ENCODE measurements at regions of chr3 and their contacts with region 1.

Region 1: GRCh38 chr3:124078953-124079911 is 87.3 kb upstream of the ROPN1 start:
- DNase-seq: peak; percentile 48
- H3K4me3 Mint-ChIP-seq: no peak overlapping the region
- H3K27ac Mint-ChIP-seq: no peak overlapping the region
- H3K4me1 Mint-ChIP-seq: no peaks in the 10 kb centered on the region
- H3K27me3 Mint-ChIP-seq: peaks cover 78% of the 10 kb centered on the region
- CTCF ChIP-seq: peak; percentile 72

Region 2: GRCh38 chr3:123723522-123724168 is 355.6 kb before region 1 on chr3:
- CTCF ChIA-PET with region 1: interaction called, 3 read pairs
- POLR2A ChIA-PET with region 1: no interaction called
- intact Hi-C with region 1: loop called (anchors 10 kb)
- DNase-seq: peak; percentile 93
- H3K4me3 Mint-ChIP-seq: no peak overlapping the region
- H3K27ac Mint-ChIP-seq: no peak overlapping the region
- H3K4me1 Mint-ChIP-seq: peaks cover 7% of the 10 kb centered on the region
- H3K27me3 Mint-ChIP-seq: no peaks in the 10 kb centered on the region
- CTCF ChIP-seq: peak; percentile 64

Region 3: GRCh38 chr3:124014366-124014942 is 64.8 kb before region 1 on chr3:
- CTCF ChIA-PET with region 1: interaction called, 6 read pairs
- POLR2A ChIA-PET with region 1: no interaction called
- intact Hi-C with region 1: loop called (anchors 1 kb)
- DNase-seq: no peak
- H3K4me3 Mint-ChIP-seq: no peak overlapping the region
- H3K27ac Mint-ChIP-seq: no peak overlapping the region
- H3K4me1 Mint-ChIP-seq: no peaks in the 10 kb centered on the region
- H3K27me3 Mint-ChIP-seq: peaks cover 89% of the 10 kb centered on the region
- CTCF ChIP-seq: no peak

Region 4: GRCh38 chr3:124063197-124063909 is 15.9 kb before region 1 on chr3:
- CTCF ChIA-PET with region 1: interaction called, 11 read pairs
- POLR2A ChIA-PET with region 1: no interaction called
- intact Hi-C with region 1: no loop called
- DNase-seq: no peak
- H3K4me3 Mint-ChIP-seq: no peak overlapping the region
- H3K27ac Mint-ChIP-seq: no peak overlapping the region
- H3K4me1 Mint-ChIP-seq: no peaks in the 10 kb centered on the region
- H3K27me3 Mint-ChIP-seq: peaks cover 16% of the 10 kb centered on the region
- CTCF ChIP-seq: no peak

Region 5: DNA sequence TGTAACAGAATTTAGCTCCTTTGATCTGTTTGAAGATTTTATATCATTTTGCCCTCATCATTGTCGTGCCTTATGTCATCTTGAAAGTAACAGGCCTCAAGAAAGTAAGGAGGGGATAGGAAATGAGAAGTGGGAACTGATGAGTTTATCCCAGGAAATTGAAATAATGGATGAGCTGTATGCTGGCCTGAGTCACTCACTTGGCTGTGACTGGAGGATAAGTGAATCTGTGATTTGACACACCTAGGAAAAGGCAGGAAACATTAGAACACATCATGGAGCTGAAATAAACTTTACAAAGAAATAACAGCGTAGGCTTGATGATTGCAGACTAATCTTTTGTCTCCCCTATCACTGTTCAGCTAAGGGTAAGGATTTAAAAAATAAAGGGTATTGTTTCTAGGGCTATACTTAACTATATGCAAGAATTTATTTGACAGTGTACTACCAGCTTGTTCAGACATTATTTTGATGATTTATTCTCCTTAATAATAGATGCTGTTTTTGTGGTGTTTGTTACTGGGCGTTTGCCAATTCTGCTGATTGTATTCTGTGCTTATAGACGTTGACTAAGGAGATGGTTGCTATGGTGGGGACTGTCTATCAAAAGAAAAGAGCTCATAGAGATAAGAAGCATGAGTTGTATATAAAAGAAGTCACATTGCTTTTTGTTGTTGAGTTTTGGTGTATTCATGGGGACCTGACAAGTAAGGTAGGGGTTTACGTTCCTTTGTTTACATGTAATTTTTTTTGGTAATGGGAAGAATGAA is 18.3 kb after region 1 on chr3:
- CTCF ChIA-PET with region 1: interaction called, 10 read pairs
- POLR2A ChIA-PET with region 1: no interaction called
- intact Hi-C with region 1: no loop called
- DNase-seq: no peak
- H3K4me3 Mint-ChIP-seq: no peak overlapping the region
- H3K27ac Mint-ChIP-seq: no peak overlapping the region
- H3K4me1 Mint-ChIP-seq: no peaks in the 10 kb centered on the region
- H3K27me3 Mint-ChIP-seq: peaks cover 90% of the 10 kb centered on the region
- CTCF ChIP-seq: no peak

Region 6: DNA sequence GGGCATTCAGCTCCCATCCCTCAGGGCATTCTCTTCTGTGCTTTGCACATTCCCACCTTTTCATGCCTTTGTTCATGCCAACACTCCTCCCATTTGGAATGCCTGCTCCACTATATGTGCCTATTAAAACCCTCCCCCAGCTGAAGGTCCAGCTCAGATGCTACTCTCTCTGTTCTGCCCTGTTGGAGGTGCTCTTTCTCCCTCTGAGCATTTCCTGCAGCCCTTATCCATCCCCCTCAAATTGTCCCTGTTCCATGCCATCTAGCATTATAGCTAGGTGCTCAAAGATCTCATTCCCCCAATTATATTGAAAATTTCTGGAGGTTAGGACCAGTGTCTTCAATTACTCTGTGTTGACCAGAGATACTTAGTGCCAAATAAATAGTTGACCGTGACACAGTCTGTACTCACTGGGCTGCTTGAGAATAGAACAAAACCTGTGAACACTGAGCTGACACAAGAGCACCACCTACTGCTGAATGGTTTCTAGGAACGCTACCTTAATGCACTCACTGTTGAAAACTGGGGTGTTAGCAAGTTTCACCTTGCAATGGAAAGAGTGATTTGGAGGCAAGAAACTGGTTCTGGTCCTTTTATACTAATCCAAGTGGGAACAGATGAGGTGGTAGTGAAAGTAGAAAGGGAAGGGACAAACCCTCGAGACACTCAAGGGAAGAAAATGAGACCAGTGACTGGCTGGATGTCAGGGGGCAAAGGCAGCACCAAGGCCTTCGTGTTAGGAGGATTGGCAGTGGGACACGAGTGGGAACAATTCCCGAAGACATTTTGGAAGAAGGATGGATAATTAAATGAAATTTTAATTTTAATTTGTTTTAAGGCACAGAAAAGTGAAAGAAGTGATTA is 202.5 kb after region 1 on chr3:
- CTCF ChIA-PET with region 1: interaction called, 7 read pairs
- POLR2A ChIA-PET with region 1: no interaction called
- intact Hi-C with region 1: loop called (anchors 2 kb)
- DNase-seq: peak; percentile 60
- H3K4me3 Mint-ChIP-seq: no peak overlapping the region
- H3K27ac Mint-ChIP-seq: no peak overlapping the region
- H3K4me1 Mint-ChIP-seq: peaks cover 6% of the 10 kb centered on the region
- H3K27me3 Mint-ChIP-seq: peaks cover 73% of the 10 kb centered on the region
- CTCF ChIP-seq: peak; percentile 74

Measured in MCF 10A (cell line).